WTC11 (cell line): ENCODE measurements at regions of chr10 and their contacts with region 1.

Region 1: GRCh38 chr10:78047314-78047891 is 13.7 kb downstream of the RPS24 start:
- DNase-seq: peak; percentile 97
- ATAC-seq: peak; percentile 65
- H3K4me3 Mint-ChIP-seq: no peak overlapping the region
- H3K27ac Mint-ChIP-seq: no peak overlapping the region
- H3K4me1 Mint-ChIP-seq: peaks cover 33% of the 10 kb centered on the region
- H3K27me3 Mint-ChIP-seq: no peaks in the 10 kb centered on the region
- CTCF ChIP-seq: peak; percentile 92

Region 2: DNA sequence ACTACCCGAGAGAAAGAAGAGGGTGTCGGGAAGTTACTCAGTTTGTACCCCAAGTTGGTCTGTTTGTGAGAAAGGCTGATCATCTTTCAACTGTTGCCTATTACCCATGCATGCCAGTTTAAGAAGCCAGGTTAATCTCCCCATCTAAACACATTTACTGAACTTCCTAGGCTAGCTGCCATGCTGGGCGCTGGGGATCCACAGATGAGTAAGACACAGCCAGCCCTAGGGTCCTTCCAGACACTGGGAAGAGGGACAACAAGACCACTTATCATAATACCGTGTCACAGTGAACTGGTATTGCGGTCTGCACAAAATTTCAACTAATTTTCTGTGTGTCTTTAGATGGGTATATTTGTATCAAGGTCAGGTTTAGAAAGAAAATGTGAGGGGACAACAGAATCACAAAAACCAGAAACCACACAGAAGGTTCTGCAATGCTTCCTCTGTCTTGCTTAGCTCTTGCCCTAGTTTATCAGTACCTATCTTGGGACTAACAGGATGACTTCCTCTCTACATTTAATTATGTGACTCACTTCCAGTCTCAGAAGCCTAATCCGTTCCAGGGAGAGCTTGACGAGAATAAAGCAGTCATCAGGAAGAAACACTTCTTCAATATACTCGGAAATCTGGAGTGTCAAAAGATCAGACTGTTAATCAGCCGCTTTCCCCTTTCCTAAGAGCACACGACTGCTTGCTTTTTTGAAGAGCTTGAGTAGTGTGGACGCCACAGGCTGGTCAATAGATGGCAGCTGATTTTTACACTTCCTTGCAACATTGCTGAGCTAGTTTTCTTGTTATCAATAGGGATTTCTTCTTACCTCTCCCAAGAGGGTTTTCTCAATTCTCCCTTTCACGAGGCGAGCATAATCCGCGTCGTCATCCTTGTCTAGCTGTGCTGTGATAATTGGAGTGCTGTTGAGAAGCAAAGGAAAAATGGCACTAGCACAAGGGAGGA is 63.7 kb before region 1 on chr10:
- CTCF ChIA-PET with region 1: no interaction called
- POLR2A ChIA-PET with region 1: no interaction called
- DNase-seq: no peak
- ATAC-seq: no peak
- H3K4me3 Mint-ChIP-seq: no peak overlapping the region
- H3K27ac Mint-ChIP-seq: no peak overlapping the region
- H3K4me1 Mint-ChIP-seq: peaks cover 5% of the 10 kb centered on the region; the same call in 1 of the 2 replicates
- H3K27me3 Mint-ChIP-seq: no peaks in the 10 kb centered on the region
- CTCF ChIP-seq: no peak

Region 3: GRCh38 chr10:78015546-78015945 is 31.9 kb before region 1 on chr10:
- CTCF ChIA-PET with region 1: no interaction called
- POLR2A ChIA-PET with region 1: no interaction called
- DNase-seq: no peak
- ATAC-seq: no peak
- H3K4me3 Mint-ChIP-seq: no peak overlapping the region
- H3K27ac Mint-ChIP-seq: no peak overlapping the region
- H3K4me1 Mint-ChIP-seq: no peaks in the 10 kb centered on the region
- H3K27me3 Mint-ChIP-seq: no peaks in the 10 kb centered on the region
- CTCF ChIP-seq: no peak

Region 4: DNA sequence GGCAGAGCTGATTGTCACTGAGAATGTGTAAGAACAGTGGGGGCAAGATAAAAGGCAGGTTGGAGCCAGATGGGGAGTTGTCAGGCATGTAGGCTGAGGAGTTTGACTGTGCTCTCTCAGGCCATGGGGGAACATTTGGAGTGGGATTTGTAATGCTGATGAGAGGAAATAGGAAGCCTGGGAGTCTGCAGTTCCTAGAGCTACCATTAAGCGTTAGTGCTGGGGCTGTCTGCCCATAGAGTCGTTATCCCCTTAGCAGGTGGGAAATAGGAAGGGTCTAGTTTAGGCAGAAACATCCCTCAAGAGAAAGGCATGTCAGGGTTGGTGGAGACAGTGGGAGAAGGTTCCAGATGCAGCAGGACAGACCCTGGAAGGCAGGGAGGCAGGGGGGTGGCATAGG is 61.8 kb after region 1 on chr10:
- CTCF ChIA-PET with region 1: interaction called, 16 read pairs
- POLR2A ChIA-PET with region 1: no interaction called
- DNase-seq: peak; percentile 18
- ATAC-seq: peak; percentile 99
- H3K4me3 Mint-ChIP-seq: no peak overlapping the region
- H3K27ac Mint-ChIP-seq: peak overlapping the region; percentile 63
- H3K4me1 Mint-ChIP-seq: peaks cover 17% of the 10 kb centered on the region
- H3K27me3 Mint-ChIP-seq: peaks cover 17% of the 10 kb centered on the region
- CTCF ChIP-seq: no peak

Region 5: DNA sequence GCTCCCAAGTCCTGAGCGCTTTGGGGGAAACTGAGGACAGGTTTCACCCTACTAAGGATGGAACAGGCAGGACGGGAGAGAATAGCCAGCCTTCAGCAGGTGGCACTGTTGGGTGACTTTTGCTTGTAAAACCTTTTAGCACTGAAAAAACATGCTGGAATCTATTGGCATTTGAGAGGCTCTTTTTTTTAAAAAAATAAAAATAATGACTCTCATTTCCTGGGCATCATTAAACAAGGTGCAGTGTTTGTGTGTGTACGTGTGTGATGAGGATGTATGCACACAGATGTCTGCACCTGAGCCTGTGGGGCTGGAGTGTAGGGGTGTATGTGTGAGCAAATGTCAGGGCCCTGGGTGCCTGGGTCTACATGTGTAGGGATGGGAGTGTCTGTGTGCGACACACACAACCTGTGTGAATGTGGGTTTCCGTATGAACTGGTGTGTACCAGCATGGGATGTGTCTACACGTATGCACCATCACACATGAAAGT is 164.2 kb after region 1 on chr10:
- CTCF ChIA-PET with region 1: interaction called, 15 read pairs
- POLR2A ChIA-PET with region 1: no interaction called
- DNase-seq: peak; percentile 34
- ATAC-seq: no peak
- H3K4me3 Mint-ChIP-seq: no peak overlapping the region
- H3K27ac Mint-ChIP-seq: peak overlapping the region; percentile 2; the same call in 1 of the 2 replicates
- H3K4me1 Mint-ChIP-seq: peaks cover 9% of the 10 kb centered on the region
- H3K27me3 Mint-ChIP-seq: no peaks in the 10 kb centered on the region
- CTCF ChIP-seq: no peak

Region 6: GRCh38 chr10:78258323-78259030 is 211.1 kb after region 1 on chr10:
- CTCF ChIA-PET with region 1: interaction called, 26 read pairs
- POLR2A ChIA-PET with region 1: no interaction called
- DNase-seq: no peak
- ATAC-seq: peak; percentile 55; the same call in 1 of the 2 replicates
- H3K4me3 Mint-ChIP-seq: no peak overlapping the region
- H3K27ac Mint-ChIP-seq: no peak overlapping the region
- H3K4me1 Mint-ChIP-seq: no peaks in the 10 kb centered on the region
- H3K27me3 Mint-ChIP-seq: peaks cover 4% of the 10 kb centered on the region; the same call in 1 of the 2 replicates
- CTCF ChIP-seq: no peak

Region 7: DNA sequence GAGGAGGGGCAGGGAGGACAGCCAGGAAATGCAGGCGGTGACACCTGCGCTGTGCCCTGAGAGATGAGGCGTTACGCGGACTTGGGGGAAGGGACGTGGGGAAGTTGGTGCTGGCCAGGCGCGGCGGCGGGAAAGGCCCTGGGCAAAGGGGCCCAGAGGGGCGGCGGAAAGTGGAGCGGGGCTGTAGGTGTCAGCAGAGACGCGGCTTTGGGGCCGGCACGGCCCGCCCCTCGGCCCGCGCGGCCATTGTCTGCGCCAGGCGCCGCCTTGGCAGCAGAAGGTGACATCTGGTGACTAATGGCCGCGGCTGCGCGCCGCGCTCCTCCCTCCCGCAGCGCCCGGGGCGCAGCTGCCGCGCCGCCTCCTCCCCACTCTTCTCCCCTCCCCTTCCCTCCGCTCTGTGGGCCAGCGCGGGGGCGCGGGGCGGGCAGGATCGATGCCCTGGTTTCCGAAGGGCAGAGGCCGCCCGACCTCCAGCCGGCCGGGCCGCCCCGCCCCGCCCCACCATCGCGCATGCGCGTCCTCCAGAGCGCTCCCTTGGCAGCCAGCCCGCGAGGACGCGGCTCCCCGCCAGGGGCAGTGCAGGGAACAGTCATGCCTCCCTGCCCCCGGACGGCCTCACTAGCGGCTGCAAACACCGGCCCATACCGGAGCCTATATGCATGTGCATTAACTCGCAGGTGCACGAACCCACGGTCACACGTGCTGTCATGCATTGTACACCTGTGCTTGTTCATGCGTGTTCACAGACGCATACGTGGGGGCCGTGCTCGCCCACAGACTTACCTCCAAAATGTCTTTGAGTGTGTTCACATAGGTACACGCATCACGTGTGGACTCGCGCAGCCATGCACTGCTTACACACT is 255.8 kb after region 1 on chr10:
- CTCF ChIA-PET with region 1: interaction called, 29 read pairs
- POLR2A ChIA-PET with region 1: no interaction called
- DNase-seq: peak; percentile 96
- ATAC-seq: peak; percentile 91
- H3K4me3 Mint-ChIP-seq: peak overlapping the region; percentile 82
- H3K27ac Mint-ChIP-seq: peak overlapping the region; percentile 85
- H3K4me1 Mint-ChIP-seq: peaks cover 31% of the 10 kb centered on the region
- H3K27me3 Mint-ChIP-seq: no peaks in the 10 kb centered on the region; the same call in 1 of the 2 replicates
- CTCF ChIP-seq: peak; percentile 53